IMR-90 (cell line): ENCODE measurements at regions of chr2 and their contacts with region 1.

Region 1: DNA sequence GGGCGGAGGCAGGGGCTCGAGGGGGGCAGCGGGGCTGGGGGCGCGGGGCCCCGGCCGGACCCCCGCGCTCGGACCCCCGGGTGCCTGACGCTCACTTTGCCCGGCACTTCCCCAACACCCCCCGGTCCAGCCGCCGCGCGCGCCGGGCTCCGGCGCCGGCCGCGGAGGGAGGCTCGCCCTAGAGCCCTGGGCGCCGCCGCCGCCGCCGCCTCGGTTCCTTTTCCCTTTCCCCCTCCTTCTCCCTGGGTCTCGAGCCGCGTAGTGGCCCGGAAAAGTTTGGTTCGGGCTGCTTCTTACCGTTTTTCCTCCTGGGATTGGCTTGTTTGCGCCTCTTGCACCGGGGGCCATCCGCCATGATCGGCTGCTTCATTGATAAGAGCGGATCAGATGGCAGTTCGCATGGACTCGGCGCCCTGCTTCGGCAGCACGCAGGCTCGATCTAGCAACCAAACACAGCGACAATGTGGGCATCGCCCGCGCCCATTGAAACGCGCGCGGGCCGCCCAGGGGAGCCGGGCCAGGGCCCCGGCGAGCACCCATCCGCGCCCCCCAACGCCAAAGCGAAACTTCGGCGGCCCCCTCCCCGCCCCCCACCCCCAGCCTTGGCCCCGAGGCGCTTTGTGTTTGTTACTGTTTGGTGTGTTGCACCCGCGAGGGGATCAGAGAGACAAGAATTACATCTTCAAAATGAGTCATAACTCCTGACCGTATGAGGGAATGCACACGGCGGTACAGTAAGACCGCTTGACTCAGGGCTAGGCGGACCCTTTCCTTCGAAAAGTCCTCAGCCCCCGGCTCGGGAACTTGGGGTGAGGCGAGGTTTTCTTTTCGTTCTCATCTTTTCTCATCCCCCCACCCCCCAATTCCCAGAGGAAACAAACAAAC is 2.7 kb downstream of the ZEB2 start:
- DNase-seq: peak; percentile 98
- ATAC-seq: peak; percentile 60
- H3K4me3 ChIP-seq: peak overlapping the region; percentile 99
- H3K27ac ChIP-seq: peak overlapping the region; percentile 99
- H3K4me1 ChIP-seq: peaks cover 5% of the 10 kb centered on the region; the same call in 1 of the 2 replicates
- H3K27me3 ChIP-seq: no peaks in the 10 kb centered on the region
- CTCF ChIP-seq: no peak
- POLR2A ChIP-seq: no peak; the same call in none of the 2 replicates
- RAD21 ChIP-seq: peak; percentile 41

Region 2: DNA sequence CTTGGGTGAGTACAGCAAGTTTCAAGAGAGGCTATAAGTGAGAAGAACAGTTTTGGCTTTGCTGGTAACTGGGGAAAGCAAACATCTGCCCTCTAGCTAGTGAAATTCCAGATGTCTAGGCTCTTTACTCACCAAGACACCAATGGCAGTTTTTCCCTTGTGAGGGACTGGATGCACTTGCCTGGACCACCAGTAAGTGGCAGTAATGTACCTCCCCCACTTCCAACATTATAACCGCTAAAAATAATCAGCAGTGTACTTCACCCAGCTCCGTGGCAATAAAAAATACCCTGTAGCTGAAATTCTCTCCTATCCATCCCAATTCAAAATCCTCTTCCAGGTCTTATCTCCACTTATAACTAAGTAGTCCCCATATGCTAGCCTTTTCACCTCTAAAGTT is 1004.1 kb before region 1 on chr2:
- CTCF ChIA-PET with region 1: no interaction called
- POLR2A ChIA-PET with region 1: no interaction called
- dilution Hi-C with region 1: no loop called
- in situ Hi-C with region 1: loop called (anchors 25 kb)
- intact Hi-C with region 1: loop called (anchors 2 kb)
- DNase-seq: peak; percentile 75
- ATAC-seq: peak; percentile 100
- H3K4me3 ChIP-seq: no peak overlapping the region
- H3K27ac ChIP-seq: no peak overlapping the region
- H3K4me1 ChIP-seq: no peaks in the 10 kb centered on the region; the same call in 1 of the 2 replicates
- H3K27me3 ChIP-seq: no peaks in the 10 kb centered on the region
- CTCF ChIP-seq: peak; percentile 84
- POLR2A ChIP-seq: no peak
- RAD21 ChIP-seq: peak; percentile 90

Region 3: GRCh38 chr2:144332356-144333142 is 184.7 kb before region 1 on chr2:
- CTCF ChIA-PET with region 1: no interaction called
- POLR2A ChIA-PET with region 1: no interaction called
- dilution Hi-C with region 1: no loop called
- in situ Hi-C with region 1: loop called (anchors 10 kb)
- intact Hi-C with region 1: no loop called
- DNase-seq: peak; percentile 83
- ATAC-seq: peak; percentile 96
- H3K4me3 ChIP-seq: peak overlapping the region; percentile 87
- H3K27ac ChIP-seq: no peak overlapping the region; the same call in 1 of the 2 replicates
- H3K4me1 ChIP-seq: no peaks in the 10 kb centered on the region
- H3K27me3 ChIP-seq: no peaks in the 10 kb centered on the region
- CTCF ChIP-seq: no peak
- POLR2A ChIP-seq: peak; percentile 63; the same call in 1 of the 2 replicates
- RAD21 ChIP-seq: peak; percentile 2

Region 4: DNA sequence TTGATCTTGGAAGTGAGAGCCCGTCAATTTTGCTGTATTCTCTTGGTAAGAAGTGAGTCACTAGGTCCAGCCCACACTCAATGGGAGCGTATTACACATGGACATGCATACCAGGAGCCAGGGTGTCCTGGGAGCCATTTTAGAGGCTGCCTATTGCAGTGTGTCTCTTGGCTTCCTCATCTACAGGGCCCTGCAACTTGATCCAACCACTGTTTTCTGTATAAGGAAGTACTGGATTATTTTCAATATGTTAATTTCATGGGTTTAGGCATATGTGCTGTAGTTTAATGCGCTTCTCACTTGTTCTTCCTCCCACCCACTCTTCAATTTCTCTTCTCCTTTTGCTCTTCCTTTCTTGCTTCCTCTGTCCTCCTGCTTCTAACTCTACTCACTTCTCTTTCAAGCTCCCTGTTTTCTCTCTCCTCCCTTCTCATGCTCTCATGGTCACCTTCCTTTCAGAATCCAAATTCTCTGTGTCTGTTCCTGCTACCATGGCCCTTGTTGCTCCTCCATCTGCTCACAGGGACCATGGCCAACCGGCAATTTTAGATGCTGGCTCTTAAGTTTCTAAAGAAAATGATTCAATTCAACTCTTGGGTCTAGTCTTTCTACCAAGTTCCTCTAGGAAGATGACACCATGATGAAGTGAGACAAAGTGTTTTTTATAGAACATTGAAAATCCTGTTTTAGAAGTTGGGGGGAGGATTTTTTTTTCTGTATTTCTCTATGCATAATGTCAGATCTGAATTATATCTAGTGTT is 154.7 kb after region 1 on chr2:
- CTCF ChIA-PET with region 1: no interaction called
- POLR2A ChIA-PET with region 1: no interaction called
- dilution Hi-C with region 1: no loop called
- in situ Hi-C with region 1: no loop called
- intact Hi-C with region 1: no loop called
- DNase-seq: peak; percentile 25
- ATAC-seq: no peak
- H3K4me3 ChIP-seq: no peak overlapping the region
- H3K27ac ChIP-seq: no peak overlapping the region
- H3K4me1 ChIP-seq: no peaks in the 10 kb centered on the region
- H3K27me3 ChIP-seq: no peaks in the 10 kb centered on the region
- CTCF ChIP-seq: no peak
- POLR2A ChIP-seq: no peak
- RAD21 ChIP-seq: no peak

Region 5: DNA sequence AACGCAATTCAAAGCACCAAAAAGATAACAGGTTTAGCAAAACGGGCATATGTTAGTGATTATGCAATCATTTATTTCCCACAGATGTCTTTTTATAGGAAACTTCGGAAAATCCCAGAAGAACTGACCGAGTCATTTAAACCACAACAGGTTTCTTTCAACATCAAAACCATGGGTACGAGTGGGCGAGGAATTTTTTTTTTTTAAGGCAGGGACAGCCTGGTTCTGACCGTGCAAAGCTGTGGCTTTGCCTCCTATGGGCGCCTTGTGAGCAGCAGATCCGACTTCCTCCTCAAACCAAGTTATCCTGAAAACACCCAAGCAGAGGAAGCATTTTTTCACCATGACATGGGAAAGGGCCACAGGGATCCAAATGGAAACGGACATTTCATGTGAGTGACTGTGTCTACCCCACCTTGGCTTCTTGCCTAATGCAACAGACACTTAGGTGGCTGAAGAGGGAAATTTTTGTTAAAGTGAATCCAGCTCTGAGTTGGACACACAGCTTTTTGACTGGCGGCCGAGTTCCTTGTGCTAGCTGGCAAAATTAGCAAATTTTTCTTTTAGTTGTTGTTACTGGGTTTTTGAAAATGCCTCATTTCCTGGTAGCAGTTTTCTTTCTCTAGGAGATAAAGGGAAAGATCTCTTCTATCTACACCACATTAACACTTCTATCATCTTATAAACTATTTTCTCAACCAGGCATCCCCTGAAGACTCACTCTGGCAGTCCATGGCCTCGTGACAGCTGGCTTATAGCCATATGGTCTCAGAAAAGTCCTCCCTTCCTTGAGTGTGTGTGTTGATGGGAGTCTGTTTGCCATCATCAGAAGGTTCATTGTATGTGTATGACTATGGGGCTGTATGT is 490.1 kb after region 1 on chr2:
- CTCF ChIA-PET with region 1: no interaction called
- POLR2A ChIA-PET with region 1: no interaction called
- dilution Hi-C with region 1: no loop called
- in situ Hi-C with region 1: no loop called
- intact Hi-C with region 1: loop called (anchors 5 kb)
- DNase-seq: peak; percentile 98
- ATAC-seq: peak; percentile 97
- H3K4me3 ChIP-seq: peak overlapping the region; percentile 19; the same call in 1 of the 2 replicates
- H3K27ac ChIP-seq: peak overlapping the region; percentile 65
- H3K4me1 ChIP-seq: peaks cover 3% of the 10 kb centered on the region; the same call in 1 of the 2 replicates
- H3K27me3 ChIP-seq: no peaks in the 10 kb centered on the region
- CTCF ChIP-seq: no peak
- POLR2A ChIP-seq: peak; percentile 64
- RAD21 ChIP-seq: peak; percentile 41

Region 6: DNA sequence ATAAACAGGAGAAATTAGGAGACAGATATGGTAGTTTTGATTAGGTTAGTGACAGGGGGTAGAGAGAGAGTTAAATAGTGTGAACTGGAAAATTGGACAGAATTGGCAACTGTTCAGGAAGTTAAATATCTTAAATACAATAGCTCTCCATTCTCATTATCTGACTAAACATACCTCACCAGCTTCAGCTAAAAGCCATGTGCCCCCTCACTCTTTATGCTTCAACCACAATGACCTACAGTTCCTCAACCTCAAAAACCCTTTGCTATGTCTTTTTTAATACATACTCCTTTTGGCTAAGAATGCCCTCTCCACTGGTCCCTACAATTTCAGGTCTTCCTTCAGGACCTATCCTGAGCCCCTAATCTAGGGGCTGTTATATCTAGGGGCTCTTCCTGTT is 742.9 kb after region 1 on chr2:
- CTCF ChIA-PET with region 1: no interaction called
- POLR2A ChIA-PET with region 1: no interaction called
- dilution Hi-C with region 1: no loop called
- in situ Hi-C with region 1: no loop called
- intact Hi-C with region 1: loop called (anchors 10 kb)
- DNase-seq: no peak
- ATAC-seq: no peak
- H3K4me3 ChIP-seq: no peak overlapping the region
- H3K27ac ChIP-seq: no peak overlapping the region
- H3K4me1 ChIP-seq: no peaks in the 10 kb centered on the region
- H3K27me3 ChIP-seq: no peaks in the 10 kb centered on the region
- CTCF ChIP-seq: no peak
- POLR2A ChIP-seq: no peak
- RAD21 ChIP-seq: no peak

Region 7: GRCh38 chr2:145593832-145594614 is 1076.8 kb after region 1 on chr2:
- CTCF ChIA-PET with region 1: no interaction called
- POLR2A ChIA-PET with region 1: no interaction called
- dilution Hi-C with region 1: no loop called
- in situ Hi-C with region 1: no loop called
- intact Hi-C with region 1: loop called (anchors 5 kb)
- DNase-seq: peak; percentile 84
- ATAC-seq: peak; percentile 77
- H3K4me3 ChIP-seq: no peak overlapping the region
- H3K27ac ChIP-seq: no peak overlapping the region
- H3K4me1 ChIP-seq: peaks cover 2% of the 10 kb centered on the region; the same call in 1 of the 2 replicates
- H3K27me3 ChIP-seq: no peaks in the 10 kb centered on the region
- CTCF ChIP-seq: no peak; the same call in 1 of the 2 replicates
- POLR2A ChIP-seq: no peak
- RAD21 ChIP-seq: peak; percentile 21; the same call in 1 of the 2 replicates

Region 8: GRCh38 chr2:146523196-146523595 is 2006.0 kb after region 1 on chr2:
- CTCF ChIA-PET with region 1: no interaction called
- POLR2A ChIA-PET with region 1: no interaction called
- dilution Hi-C with region 1: no loop called
- in situ Hi-C with region 1: no loop called
- intact Hi-C with region 1: loop called (anchors 10 kb)
- DNase-seq: peak; percentile 9
- ATAC-seq: no peak
- H3K4me3 ChIP-seq: no peak overlapping the region
- H3K27ac ChIP-seq: no peak overlapping the region
- H3K4me1 ChIP-seq: no peaks in the 10 kb centered on the region
- H3K27me3 ChIP-seq: no peaks in the 10 kb centered on the region
- CTCF ChIP-seq: peak; percentile 39
- POLR2A ChIP-seq: no peak
- RAD21 ChIP-seq: peak; percentile 44